Sigmoid colon (tissue), 7 donors: ENCODE measurements at regions of chrX and their contacts with region 1.

Region 1: DNA sequence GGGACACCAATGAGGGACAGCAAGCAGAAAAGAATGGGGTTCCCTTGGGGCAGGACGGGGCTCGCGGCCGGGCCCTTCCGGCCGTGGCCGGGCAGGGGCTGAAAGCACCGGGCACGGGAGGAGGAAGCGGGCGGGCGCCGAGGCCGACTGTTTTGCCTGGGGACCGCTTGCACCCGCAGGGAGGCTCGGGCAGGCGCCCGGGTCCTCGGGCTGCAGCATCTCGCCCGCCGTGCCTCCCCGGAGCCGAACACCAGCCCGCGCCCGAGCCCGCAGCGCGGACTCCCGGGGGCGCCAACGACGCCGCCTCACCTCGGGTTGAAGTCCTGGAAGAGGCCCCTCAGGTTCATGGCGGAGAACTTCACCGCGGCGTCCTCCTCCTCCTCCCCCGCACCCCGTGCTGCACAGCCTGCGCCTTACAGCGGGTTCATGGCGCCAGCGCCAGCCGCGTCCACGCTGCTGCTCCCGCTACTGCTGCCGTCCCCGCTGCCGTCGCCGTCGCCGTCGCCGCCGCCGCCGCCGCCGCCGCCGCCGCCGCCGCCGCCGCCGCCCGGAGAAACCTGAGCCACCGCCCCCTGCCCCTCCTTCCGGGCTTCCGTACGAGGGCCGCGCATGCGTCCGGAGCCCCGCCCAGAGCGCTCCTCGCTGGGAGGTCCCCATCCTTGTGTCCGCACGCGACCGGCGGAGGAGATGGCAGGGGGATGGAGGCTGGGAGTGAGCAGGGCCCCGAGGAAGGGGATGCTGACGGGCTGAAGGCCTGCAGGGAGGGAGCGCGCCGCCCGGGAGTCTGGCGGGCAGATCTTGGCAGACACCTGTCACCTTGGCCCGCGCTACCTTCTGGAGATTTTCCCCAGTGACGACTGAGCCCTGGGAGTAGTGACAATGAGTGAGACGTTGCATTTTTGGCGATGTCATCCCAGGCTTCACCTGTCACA is at the start of gene TMEM185A:
- DNase-seq: peak; percentile 85
- H3K4me3 ChIP-seq: peak within 1 kb of the TSS; percentile 62 to 84 (median 68)
- H3K27ac ChIP-seq: peak within 1 kb of the TSS; percentile 77 to 81 (median 78)
- H3K4me1 ChIP-seq: peaks cover 0 to 24% (median 5%) of the 10 kb centered on the region in 4 donors
- H3K27me3 ChIP-seq: no peaks in the 10 kb centered on the region
- CTCF ChIP-seq: no peak
- EP300 ChIP-seq: no peak
- POLR2A ChIP-seq: no peak
- total RNA-seq, gene TMEM185A: 9.6 to 18.3 (median 13.0) TPM

Region 2: DNA sequence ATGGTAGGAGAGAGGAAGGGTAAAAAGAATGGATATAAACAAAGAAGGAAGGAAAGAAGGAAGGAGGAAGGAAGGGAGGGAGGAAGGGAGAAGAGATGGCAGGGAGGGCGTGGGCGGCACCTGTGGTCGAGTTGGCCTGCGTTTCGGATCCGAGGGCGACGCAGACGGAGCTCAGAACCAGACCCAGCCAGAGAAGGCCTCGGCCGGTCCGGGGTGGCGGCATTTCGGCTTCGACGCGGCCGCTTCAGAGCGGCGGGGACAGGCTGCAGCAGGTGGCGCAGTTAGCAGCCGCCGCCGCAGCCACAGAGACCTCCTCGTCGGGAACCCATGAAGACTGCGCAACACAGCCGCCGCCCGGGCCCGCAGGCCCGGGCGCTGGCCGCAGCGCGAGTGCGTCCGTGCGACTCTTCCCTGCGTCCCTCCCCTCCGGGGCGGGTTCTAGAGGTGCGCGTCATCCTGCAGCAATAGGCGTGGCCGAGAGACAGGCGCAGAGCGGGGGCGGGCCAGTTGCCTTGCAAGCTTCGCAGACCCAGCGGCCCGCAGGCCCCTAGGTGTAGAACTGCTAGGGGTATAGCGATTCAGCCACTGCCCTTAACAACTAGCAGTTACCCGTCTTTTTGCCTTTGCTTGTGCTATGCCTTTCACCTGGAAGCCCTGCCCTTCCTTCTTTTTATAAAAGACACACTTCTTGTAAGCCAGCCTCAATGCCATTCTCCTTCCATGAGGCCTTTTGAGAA is 126.4 kb before region 1 on chrX and contains the start of gene IDS:
- intact Hi-C with region 1: loop called (anchors 2 kb)
- DNase-seq: peak; percentile 96
- H3K4me3 ChIP-seq: peak within 1 kb of the TSS; percentile 65 to 69 (median 68)
- H3K27ac ChIP-seq: peak within 1 kb of the TSS; percentile 83 to 94 (median 88)
- H3K4me1 ChIP-seq: peaks cover 0 to 10% (median 2%) of the 10 kb centered on the region in 4 donors
- H3K27me3 ChIP-seq: no peaks in the 10 kb centered on the region
- CTCF ChIP-seq: no peak
- EP300 ChIP-seq: no peak
- POLR2A ChIP-seq: peak; percentile 91 to 95
- total RNA-seq, gene IDS: 71.3 to 97.2 (median 89.9) TPM

Region 3: GRCh38 chrX:149527705-149528104 is 103.8 kb before region 1 on chrX:
- intact Hi-C with region 1: loop called (anchors 5 kb)
- DNase-seq: no peak
- H3K4me3 ChIP-seq: no peak overlapping the region
- H3K27ac ChIP-seq: no peak overlapping the region
- H3K4me1 ChIP-seq: no peaks in the 10 kb centered on the region
- H3K27me3 ChIP-seq: no peaks in the 10 kb centered on the region
- CTCF ChIP-seq: peak in 3 of 4 experiments; percentile 26 to 53 (median 38)
- EP300 ChIP-seq: no peak
- POLR2A ChIP-seq: no peak